ENCODE measurements at regions of chr7 and their contacts with region 1.

Region 1: GRCh38 chr7:44858161-44858560 is 10.3 kb upstream of the H2AZ2 start:
- DNase-seq: peak in 2 of 3 donors; percentile 44 to 48
- H3K4me3 ChIP-seq: no peak overlapping the region
- H3K27ac ChIP-seq: no peak overlapping the region
- H3K4me1 ChIP-seq: peaks cover 0 to 3% (median under 1%) of the 10 kb centered on the region in 4 experiments
- H3K27me3 ChIP-seq: no peaks in the 10 kb centered on the region

Region 2: GRCh38 chr7:44782460-44782859 is 75.7 kb before region 1 on chr7:
- CTCF ChIA-PET with region 1: no interaction called
- POLR2A ChIA-PET with region 1: no interaction called
- DNase-seq: no peak
- H3K4me3 ChIP-seq: no peak overlapping the region
- H3K27ac ChIP-seq: no peak overlapping the region
- H3K4me1 ChIP-seq: no peaks in the 10 kb centered on the region
- H3K27me3 ChIP-seq: no peaks in the 10 kb centered on the region

Region 3: GRCh38 chr7:44847508-44847920 is 10.6 kb before region 1 on chr7:
- CTCF ChIA-PET with region 1: interaction called, 36 read pairs
- POLR2A ChIA-PET with region 1: interaction called, 4 read pairs
- DNase-seq: peak; percentile 90 to 96 (median 94)
- H3K4me3 ChIP-seq: peak overlapping the region; percentile 72 to 98 (median 87)
- H3K27ac ChIP-seq: peak overlapping the region; percentile 93 to 97
- H3K4me1 ChIP-seq: peaks cover 7 to 40% (median 25%) of the 10 kb centered on the region in 4 experiments
- H3K27me3 ChIP-seq: no peaks in the 10 kb centered on the region

Region 4: GRCh38 chr7:44876393-44876792 is 18.2 kb after region 1 on chr7:
- CTCF ChIA-PET with region 1: interaction called, 22 read pairs
- POLR2A ChIA-PET with region 1: interaction called, 3 read pairs
- DNase-seq: no peak
- H3K4me3 ChIP-seq: no peak overlapping the region
- H3K27ac ChIP-seq: no peak overlapping the region
- H3K4me1 ChIP-seq: peaks cover 14 to 21% (median 18%) of the 10 kb centered on the region in 4 experiments
- H3K27me3 ChIP-seq: no peaks in the 10 kb centered on the region

Region 5: DNA sequence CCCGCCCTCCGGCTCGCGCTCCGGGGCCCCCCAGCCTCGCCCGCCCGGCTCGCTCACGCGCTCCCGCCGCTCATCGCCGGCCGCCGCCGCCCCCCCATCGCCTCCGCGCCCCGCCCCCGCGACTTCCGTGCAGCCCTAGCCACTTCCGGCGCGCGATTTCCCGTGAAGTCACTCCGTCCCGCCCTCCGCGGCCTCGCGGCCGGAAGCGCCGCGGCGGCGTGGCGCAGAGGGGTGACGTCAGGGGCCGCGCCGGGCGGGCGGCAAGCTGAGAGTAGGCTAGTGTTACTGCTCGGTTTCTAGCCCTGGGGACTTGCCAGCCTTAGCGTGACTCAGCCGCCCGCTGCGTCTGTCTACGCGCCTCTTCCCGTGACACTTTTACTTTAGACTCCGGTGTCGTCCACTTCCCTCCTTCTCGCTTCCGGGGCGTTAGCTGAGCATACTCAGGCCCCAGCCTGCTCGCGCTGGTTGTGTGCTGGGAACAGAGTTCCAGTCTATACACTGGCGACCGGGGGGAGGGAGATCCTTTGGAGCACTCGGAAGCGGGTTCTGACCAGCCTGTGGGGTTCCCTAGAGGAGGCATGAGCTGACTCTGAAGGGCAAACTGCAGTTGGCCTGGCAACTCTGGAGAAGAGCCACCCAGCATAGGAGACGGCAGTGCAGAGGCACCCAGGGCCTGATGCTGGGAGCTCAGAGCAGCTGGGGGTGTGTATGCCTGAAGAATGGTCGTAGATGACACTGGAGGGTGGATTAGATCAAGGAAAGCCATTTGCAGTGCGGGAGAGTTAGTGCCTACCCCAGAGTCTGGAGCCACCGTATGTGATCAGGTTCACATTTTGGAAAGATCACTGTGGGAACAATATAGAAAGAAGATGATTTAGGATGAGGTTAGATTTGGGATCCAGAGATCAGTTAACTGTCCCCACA is 27.5 kb after region 1 on chr7 and contains the start of gene PURB:
- CTCF ChIA-PET with region 1: interaction called, 22 read pairs
- POLR2A ChIA-PET with region 1: interaction called, 10 read pairs
- DNase-seq: peak; percentile 97 to 99 (median 99)
- H3K4me3 ChIP-seq: peak within 1 kb of the TSS; percentile 76 to 96 (median 89)
- H3K27ac ChIP-seq: peak within 1 kb of the TSS; percentile 97 to 99
- H3K4me1 ChIP-seq: peaks cover 33 to 55% (median 44%) of the 10 kb centered on the region in 4 experiments
- H3K27me3 ChIP-seq: no peaks in the 10 kb centered on the region

Region 6: GRCh38 chr7:44921607-44922359 is 63.6 kb after region 1 on chr7:
- CTCF ChIA-PET with region 1: interaction called, 69 read pairs
- POLR2A ChIA-PET with region 1: interaction called, 5 read pairs
- DNase-seq: peak; percentile 78 to 89 (median 83)
- H3K4me3 ChIP-seq: peak overlapping the region in 1 of 7 experiments; percentile 8
- H3K27ac ChIP-seq: no peak overlapping the region
- H3K4me1 ChIP-seq: peaks cover 0 to 3% (median 0%) of the 10 kb centered on the region in 4 experiments
- H3K27me3 ChIP-seq: no peaks in the 10 kb centered on the region

Region 7: DNA sequence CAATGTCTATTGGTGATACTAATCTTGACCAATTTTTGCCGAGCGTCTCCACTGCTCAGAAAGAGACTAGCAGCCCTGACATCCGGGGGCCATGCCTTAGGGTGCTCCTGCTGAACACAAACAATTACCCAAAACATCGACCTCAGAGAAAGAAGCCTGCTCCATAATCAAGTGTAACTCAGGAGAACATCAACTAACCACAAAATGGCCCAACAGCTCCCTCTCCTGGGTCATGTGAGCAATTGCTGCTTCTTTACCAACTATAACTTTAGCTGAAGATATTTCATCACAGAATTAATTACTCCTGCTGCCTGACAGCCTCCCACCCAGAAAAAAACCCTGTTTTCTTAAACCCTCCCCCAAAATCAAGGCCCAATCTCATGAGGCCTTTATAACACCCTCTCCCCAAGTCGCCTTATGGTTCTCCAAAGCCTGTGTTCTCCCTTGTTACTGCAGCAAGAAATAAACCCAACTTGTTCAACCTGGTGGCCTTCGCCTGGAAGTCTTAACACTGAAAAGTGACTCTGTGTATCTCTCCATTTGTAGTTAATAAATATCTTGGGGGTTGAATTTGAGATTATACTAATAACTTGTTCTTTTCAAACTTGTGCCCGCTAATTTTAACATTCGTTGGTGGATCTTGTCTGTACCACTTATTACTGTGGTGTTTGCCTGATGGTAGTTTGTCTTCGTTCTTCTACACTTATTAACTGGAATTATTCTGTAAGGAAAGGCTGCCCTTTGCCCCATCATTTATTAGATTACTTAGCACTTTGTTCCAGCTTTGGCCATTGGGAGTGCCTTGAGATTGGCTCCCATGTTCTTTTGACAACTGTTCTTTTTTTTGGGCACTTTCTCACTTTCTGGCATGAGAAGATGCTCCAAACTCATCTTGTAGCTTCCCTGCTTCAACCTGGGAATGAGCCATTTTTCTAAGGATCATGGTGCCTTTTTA is 278.2 kb after region 1 on chr7:
- CTCF ChIA-PET with region 1: interaction called, 21 read pairs
- POLR2A ChIA-PET with region 1: no interaction called
- DNase-seq: peak; percentile 80 to 91 (median 85)
- H3K4me3 ChIP-seq: no peak overlapping the region
- H3K27ac ChIP-seq: no peak overlapping the region
- H3K4me1 ChIP-seq: peaks cover 0 to 19% (median 2%) of the 10 kb centered on the region in 4 experiments
- H3K27me3 ChIP-seq: no peaks in the 10 kb centered on the region

Measured in common myeloid progenitor, CD34-positive (primary cell).